WTC11 (cell line): ENCODE measurements at regions of chr19 and their contacts with region 1.

Region 1: DNA sequence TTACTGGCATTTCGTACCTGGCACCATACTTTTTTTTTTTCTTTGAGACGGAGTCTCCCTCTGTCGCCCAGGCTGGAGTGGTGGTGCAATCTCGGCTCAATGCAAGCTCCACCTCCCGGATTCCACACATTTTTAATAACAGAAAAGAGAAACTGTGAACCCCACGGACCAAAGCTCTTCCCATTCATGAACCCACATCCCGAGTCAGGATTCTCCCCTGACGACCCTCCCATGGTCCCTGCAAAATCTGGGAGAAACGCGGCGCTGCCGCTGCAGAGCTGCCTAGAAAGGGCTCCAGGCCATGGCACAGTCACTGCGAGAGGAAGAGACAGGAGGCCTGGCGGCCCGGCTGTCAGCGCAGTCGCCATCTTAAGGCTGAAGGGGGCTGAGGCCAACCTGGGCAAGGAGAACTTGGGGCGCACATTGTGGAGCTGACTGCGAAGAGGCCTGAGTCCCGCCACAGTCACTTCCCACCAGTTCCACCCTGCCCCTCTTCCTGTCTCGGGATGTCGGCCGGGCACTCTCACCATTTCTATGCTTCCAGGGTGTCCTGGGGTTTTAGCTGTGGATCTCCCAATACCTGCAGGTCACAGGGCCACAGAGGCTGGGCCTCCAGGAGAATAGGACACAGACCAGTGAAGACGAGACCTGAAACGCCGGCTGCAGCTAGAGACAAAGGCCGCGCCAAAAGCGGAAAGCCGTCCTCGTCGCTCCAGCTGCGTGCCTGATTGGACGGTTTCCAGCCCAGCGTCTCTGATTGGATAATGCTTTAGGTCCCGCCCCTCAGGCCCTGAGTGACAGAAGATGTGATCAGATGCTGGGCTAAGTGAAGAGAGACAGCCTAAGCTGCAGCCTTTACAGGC is 71.0 kb downstream of the ZNF486 start:
- DNase-seq: peak; percentile 97
- ATAC-seq: peak; percentile 95
- H3K4me3 Mint-ChIP-seq: peak overlapping the region; percentile 100
- H3K27ac Mint-ChIP-seq: peak overlapping the region; percentile 99
- H3K4me1 Mint-ChIP-seq: peaks cover 52% of the 10 kb centered on the region
- H3K27me3 Mint-ChIP-seq: no peaks in the 10 kb centered on the region; the same call in 1 of the 2 replicates
- CTCF ChIP-seq: no peak

Region 2: GRCh38 chr19:20167020-20167644 is 70.9 kb before region 1 on chr19 and contains the start of gene ZNF486:
- CTCF ChIA-PET with region 1: no interaction called
- POLR2A ChIA-PET with region 1: interaction called, 10 read pairs
- DNase-seq: peak; percentile 98
- ATAC-seq: peak; percentile 97
- H3K4me3 Mint-ChIP-seq: peak within 1 kb of the TSS; percentile 98
- H3K27ac Mint-ChIP-seq: peak within 1 kb of the TSS; percentile 98
- H3K4me1 Mint-ChIP-seq: peaks cover 51% of the 10 kb centered on the region
- H3K27me3 Mint-ChIP-seq: no peaks in the 10 kb centered on the region
- CTCF ChIP-seq: no peak
- total RNA-seq, gene ZNF486: 20.7 to 22.3 TPM (median 20.8 TPM) in 3 replicates

Region 3: DNA sequence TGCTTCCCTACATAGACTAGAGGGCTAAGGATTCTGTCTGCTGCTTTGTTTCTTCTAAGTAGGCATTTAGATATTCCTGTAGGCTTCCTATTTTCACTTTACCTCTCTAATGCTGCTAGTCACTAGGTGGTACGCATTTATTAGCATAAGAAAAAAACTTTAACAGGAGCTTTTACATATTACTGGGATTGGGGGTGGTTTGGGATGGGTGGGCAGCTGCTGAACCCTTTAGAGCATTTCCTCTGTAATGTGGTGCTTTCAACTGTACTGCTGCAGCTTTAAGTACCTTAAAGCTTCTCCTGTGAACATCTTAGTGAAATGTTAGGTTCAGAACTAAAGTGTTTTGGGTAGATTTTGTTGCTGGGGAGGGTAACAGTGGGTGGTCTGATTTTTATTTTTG is 21.6 kb after region 1 on chr19:
- CTCF ChIA-PET with region 1: interaction called, 4 read pairs
- POLR2A ChIA-PET with region 1: interaction called, 11 read pairs
- DNase-seq: no peak
- ATAC-seq: peak; percentile 89
- H3K4me3 Mint-ChIP-seq: peak overlapping the region; percentile 43
- H3K27ac Mint-ChIP-seq: peak overlapping the region; percentile 99
- H3K4me1 Mint-ChIP-seq: peaks cover 65% of the 10 kb centered on the region
- H3K27me3 Mint-ChIP-seq: no peaks in the 10 kb centered on the region
- CTCF ChIP-seq: no peak

Region 4: DNA sequence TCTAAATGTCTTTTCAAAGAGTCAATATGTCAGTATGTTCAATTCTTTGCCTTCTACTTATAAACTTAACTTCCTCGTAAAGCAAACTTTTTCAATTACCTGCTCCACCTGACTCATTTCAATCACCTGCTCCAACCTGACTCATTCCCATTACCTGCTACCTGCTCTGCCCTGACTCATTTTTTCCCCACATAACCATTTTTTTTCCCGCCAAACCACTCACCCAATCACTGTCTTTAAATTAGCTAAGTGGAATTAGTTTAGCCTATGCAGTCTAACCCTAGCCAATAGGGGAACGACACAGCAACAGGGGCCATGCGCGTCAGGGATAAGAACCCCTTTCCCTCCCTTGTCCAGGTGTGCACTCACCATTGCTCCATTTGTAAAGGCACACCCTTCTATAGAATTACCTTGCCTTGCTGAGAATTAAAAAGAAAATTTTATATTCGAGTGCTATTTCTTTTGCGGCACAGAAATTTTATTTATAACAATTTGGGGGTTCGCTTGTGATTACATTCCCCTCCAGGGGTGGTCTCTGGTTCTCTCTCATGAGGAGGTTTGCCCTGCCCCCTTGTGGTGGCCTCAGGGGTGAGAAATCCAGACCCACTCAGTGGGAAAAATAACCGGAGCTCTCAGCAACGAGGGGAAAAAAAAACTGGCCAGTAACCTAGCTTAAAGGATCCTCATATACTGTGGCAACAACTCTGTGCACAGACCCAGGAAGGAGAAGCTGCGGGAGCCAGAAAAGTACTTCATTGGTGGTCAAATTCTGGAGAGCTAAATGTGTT is 122.1 kb after region 1 on chr19:
- CTCF ChIA-PET with region 1: interaction called, 15 read pairs
- POLR2A ChIA-PET with region 1: interaction called, 4 read pairs
- DNase-seq: peak; percentile 80
- ATAC-seq: peak; percentile 65
- H3K4me3 Mint-ChIP-seq: peak overlapping the region; percentile 24; the same call in 1 of the 2 replicates
- H3K27ac Mint-ChIP-seq: peak overlapping the region; percentile 14
- H3K4me1 Mint-ChIP-seq: peaks cover 57% of the 10 kb centered on the region
- H3K27me3 Mint-ChIP-seq: peaks cover 49% of the 10 kb centered on the region
- CTCF ChIP-seq: peak; percentile 78; the same call in 1 of the 2 replicates

Region 5: DNA sequence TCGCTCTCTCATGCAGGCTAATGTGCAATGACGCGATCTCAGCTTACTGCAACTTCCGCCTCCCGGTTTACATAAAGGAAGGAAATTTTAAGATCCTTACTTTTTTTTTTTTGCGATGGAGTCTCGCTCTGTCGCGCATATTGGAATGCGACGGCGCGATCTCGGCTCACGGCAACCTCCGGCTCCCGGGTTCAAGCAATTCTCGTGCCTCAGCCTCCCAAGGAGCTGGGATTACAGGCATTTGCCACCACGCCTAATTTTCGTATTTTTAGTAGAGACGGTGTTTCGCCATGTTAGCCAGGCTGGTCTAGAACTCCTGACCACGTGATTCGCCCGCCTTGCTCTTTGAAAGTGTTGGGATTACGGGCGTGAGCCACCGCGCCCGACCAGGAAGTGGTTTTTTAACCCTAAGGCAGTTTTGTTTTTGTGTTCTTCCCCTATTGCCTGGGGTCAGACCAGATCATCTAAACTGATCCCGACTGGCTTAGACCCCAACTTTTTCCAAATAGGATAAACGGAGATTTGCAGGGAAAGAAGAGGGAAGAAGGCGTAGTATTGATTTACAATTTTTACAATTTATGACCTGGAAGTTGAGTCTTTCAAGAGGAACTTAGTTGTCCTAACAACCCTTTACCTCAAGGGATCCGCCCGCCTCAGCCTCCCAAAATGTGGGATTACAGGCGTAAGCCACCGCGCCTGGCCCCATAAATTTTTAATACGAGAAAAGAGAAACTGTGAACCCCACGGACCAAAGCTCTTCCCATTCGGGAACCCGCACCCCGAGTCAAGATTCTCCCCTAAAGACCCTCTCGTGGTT is 185.6 kb after region 1 on chr19:
- CTCF ChIA-PET with region 1: interaction called, 4 read pairs
- POLR2A ChIA-PET with region 1: interaction called, 17 read pairs
- DNase-seq: peak; percentile 34
- ATAC-seq: no peak
- H3K4me3 Mint-ChIP-seq: peak overlapping the region; percentile 100
- H3K27ac Mint-ChIP-seq: peak overlapping the region; percentile 100
- H3K4me1 Mint-ChIP-seq: peaks cover 31% of the 10 kb centered on the region
- H3K27me3 Mint-ChIP-seq: no peaks in the 10 kb centered on the region; the same call in 1 of the 2 replicates
- CTCF ChIP-seq: no peak